ENCODE measurements at regions of chr7 and their contacts with region 1.

Region 1: GRCh38 chr7:100965723-100966541 is 3.4 kb upstream of the MUC12 start:
- DNase-seq: peak; percentile 52 to 77 (median 74)
- H3K4me3 ChIP-seq: peak overlapping the region in 1 of 4 donors; percentile 38
- H3K27ac ChIP-seq: no peak overlapping the region
- H3K4me1 ChIP-seq: peaks cover 0 to 12% of the 10 kb centered on the region in 2 donors
- H3K27me3 ChIP-seq: peaks cover 57% of the 10 kb centered on the region
- CTCF ChIP-seq: peak; percentile 30 to 81 (median 52)
- POLR2A ChIP-seq: no peak

Region 2: DNA sequence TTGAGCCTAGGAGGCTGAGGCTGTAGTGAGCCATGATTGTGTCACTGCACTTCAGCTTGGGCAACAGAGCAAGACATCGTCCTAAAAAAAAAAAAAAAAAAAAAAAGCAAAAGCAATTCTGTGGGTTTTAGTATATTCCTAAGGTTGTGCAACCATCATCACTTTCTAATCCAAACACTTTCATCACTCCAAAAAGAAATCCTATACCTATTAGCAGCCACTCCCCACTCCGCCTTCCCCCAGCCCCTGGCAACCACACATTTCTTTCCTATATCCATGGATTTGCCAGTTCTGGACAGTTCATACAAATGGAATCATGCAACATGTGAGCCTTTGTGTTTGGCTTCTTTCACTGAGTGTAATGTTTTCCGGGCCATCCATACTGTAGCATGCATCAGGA is 212.2 kb before region 1 on chr7:
- intact Hi-C with region 1: no loop called
- DNase-seq: no peak
- H3K4me3 ChIP-seq: no peak overlapping the region
- H3K27ac ChIP-seq: no peak overlapping the region
- H3K4me1 ChIP-seq: no peaks in the 10 kb centered on the region
- H3K27me3 ChIP-seq: no peaks in the 10 kb centered on the region
- CTCF ChIP-seq: no peak
- POLR2A ChIP-seq: no peak

Region 3: DNA sequence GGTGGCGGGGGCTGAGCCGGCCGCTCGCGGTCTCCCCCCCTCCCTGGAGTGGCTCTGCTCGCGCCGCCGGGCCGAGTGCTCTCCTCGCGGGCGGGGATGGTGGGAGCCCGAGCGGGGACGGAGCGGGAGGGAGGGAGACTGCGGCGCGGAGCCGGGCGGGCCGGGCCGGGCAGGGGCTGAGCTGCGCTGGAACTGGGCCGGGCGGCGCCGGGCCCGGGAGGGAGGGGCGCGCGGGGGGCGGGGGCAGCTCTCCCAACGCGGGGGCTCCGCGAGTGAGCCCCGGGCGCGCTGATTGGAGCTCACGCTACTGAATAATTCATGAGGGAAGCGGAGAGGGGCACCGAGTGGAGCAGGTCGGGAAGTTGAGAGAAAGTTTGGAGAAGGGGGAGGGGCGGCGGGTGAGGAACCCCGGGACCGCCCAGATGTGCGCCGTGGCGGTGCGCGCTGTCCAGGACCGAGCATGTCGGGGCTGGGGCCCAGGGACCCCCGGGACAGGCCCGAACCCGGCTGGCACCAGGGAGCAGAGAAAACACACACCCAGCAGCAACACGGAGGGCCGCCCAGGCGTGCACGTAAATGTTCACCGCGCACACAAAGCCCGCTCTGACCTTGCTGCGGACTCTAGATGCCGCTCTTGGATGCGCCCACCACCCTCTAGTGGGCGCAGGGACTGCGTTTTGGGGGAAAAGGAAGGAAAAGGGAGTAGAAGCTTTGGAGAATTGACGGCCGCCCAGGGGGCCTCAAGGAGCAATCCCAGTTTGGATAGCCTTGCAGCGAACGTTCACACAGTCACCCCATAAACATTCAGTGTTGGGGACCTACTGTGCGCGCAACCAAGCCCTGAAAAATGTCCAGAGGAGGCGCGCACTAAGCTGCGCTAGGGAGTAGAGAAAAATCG is 138.4 kb before region 1 on chr7 and contains the start of gene EPHB4:
- intact Hi-C with region 1: no loop called
- DNase-seq: peak; percentile 91 to 94 (median 93)
- H3K4me3 ChIP-seq: peak within 1 kb of the TSS; percentile 45 to 88 (median 60)
- H3K27ac ChIP-seq: peak within 1 kb of the TSS in 4 of 5 donors; percentile 58 to 93 (median 77)
- H3K4me1 ChIP-seq: peaks cover 21 to 33% of the 10 kb centered on the region in 2 donors
- H3K27me3 ChIP-seq: no peaks in the 10 kb centered on the region
- CTCF ChIP-seq: peak in 5 of 6 experiments; percentile 20 to 44 (median 30)
- POLR2A ChIP-seq: peak; percentile 40 to 50
- total RNA-seq, gene EPHB4: 67.5 to 188 (median 111) TPM

Region 4: DNA sequence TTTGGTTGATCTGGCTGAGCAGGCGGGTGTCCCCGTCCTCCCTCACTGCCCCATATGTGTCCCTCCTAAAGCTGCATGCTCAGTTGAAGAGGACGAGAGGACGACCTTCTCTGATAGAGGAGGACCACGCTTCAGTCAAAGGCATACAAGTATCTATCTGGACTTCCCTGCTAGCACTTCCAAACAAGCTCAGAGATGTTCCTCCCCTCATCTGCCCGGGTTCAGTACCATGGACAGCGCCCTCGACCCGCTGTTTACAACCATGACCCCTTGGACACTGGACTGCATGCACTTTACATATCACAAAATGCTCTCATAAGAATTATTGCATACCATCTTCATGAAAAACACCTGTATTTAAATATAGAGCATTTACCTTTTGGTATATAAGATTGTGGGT is 92.4 kb after region 1 on chr7:
- intact Hi-C with region 1: loop called (anchors 2 kb)
- DNase-seq: peak; percentile 45 to 74 (median 67)
- H3K4me3 ChIP-seq: no peak overlapping the region
- H3K27ac ChIP-seq: no peak overlapping the region
- H3K4me1 ChIP-seq: no peaks in the 10 kb centered on the region
- H3K27me3 ChIP-seq: peaks cover 18% of the 10 kb centered on the region
- CTCF ChIP-seq: no peak
- POLR2A ChIP-seq: no peak

Region 5: GRCh38 chr7:101077303-101078089 is 111.6 kb after region 1 on chr7:
- intact Hi-C with region 1: loop called in 1 of 2 experiments (anchors 5 kb)
- DNase-seq: peak; percentile 65 to 91 (median 79)
- H3K4me3 ChIP-seq: no peak overlapping the region
- H3K27ac ChIP-seq: no peak overlapping the region
- H3K4me1 ChIP-seq: no peaks in the 10 kb centered on the region
- H3K27me3 ChIP-seq: no peaks in the 10 kb centered on the region
- CTCF ChIP-seq: peak; percentile 68 to 77 (median 75)
- POLR2A ChIP-seq: no peak

Region 6: GRCh38 chr7:101121991-101122932 is 156.3 kb after region 1 on chr7:
- intact Hi-C with region 1: no loop called
- DNase-seq: peak; percentile 40 to 87 (median 78)
- H3K4me3 ChIP-seq: peak overlapping the region in 2 of 4 donors; percentile 52 to 53
- H3K27ac ChIP-seq: peak overlapping the region; percentile 55 to 94 (median 79)
- H3K4me1 ChIP-seq: peaks cover 24 to 36% of the 10 kb centered on the region in 2 donors
- H3K27me3 ChIP-seq: no peaks in the 10 kb centered on the region
- CTCF ChIP-seq: no peak
- POLR2A ChIP-seq: peak; percentile 25 to 63